ENCODE measurements at regions of chr11 and their contacts with region 1.

Region 1: DNA sequence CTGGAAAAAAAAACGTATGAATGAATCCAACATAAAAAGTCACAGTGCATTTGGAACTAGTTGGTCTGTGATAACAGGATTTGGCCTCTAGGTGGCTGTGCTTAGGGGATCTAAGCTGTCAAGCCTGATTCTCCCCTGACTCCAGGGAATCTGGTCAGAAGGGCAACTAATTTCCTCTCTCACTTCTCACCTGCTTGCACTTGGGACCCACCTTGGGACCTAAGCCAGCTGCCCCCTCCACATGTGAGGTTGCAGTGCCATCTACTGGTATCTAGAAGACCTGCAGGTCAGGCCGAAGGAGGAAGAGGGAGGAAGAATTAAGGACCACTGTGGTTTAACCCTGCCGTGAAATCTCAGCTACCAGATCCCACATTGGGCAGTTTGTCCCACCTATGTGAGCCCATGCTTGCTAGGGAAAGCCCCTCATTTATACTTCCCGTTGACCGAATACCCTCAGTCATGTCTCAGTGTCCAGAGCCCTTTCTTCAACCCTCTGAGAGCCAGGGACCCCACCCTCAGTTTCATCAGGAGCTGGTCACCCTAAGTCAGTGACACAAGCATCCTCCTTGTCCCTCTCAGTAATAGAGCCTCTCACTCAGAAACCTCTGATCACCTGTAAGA is 33.2 kb upstream of the CAVIN3 start:
- DNase-seq: peak; percentile 82
- ATAC-seq: peak; percentile 99
- H3K4me3 Mint-ChIP-seq: no peak overlapping the region
- H3K27ac Mint-ChIP-seq: no peak overlapping the region
- H3K4me1 Mint-ChIP-seq: peaks cover 5% of the 10 kb centered on the region
- H3K27me3 Mint-ChIP-seq: no peaks in the 10 kb centered on the region
- CTCF ChIP-seq: peak; percentile 97

Region 2: DNA sequence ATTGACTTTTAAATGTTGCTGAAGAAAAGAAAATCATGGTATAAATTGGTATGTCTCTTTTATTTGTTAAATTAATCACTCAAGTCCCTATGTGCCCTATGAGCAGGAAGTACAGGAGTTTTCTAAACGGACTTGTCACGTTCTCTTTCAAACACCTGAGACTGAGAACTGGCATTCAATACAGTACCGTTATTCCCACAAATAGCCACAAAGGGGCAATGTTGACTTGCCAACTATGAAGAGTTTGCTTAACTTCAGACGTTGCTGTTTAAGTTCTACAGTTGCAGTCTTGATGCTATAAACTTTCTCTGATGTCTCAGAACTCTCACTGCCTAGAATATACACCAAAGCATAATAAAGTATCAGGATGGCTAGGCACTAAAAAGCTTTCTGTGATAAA is 330.5 kb before region 1 on chr11:
- CTCF ChIA-PET with region 1: interaction called, 10 read pairs
- POLR2A ChIA-PET with region 1: no interaction called
- DNase-seq: no peak
- ATAC-seq: peak; percentile 93
- H3K4me3 Mint-ChIP-seq: no peak overlapping the region
- H3K27ac Mint-ChIP-seq: no peak overlapping the region
- H3K4me1 Mint-ChIP-seq: 0 out of 2 replicates have a peak, but pooled peaks cover 4% of the 10 kb centered on the region
- H3K27me3 Mint-ChIP-seq: peaks cover 26% of the 10 kb centered on the region
- CTCF ChIP-seq: no peak

Region 3: GRCh38 chr11:6040874-6041273 is 312.6 kb before region 1 on chr11:
- CTCF ChIA-PET with region 1: no interaction called
- POLR2A ChIA-PET with region 1: no interaction called
- DNase-seq: no peak
- ATAC-seq: no peak
- H3K4me3 Mint-ChIP-seq: no peak overlapping the region
- H3K27ac Mint-ChIP-seq: no peak overlapping the region
- H3K4me1 Mint-ChIP-seq: peaks cover 3% of the 10 kb centered on the region
- H3K27me3 Mint-ChIP-seq: no peaks in the 10 kb centered on the region
- CTCF ChIP-seq: no peak

Region 4: DNA sequence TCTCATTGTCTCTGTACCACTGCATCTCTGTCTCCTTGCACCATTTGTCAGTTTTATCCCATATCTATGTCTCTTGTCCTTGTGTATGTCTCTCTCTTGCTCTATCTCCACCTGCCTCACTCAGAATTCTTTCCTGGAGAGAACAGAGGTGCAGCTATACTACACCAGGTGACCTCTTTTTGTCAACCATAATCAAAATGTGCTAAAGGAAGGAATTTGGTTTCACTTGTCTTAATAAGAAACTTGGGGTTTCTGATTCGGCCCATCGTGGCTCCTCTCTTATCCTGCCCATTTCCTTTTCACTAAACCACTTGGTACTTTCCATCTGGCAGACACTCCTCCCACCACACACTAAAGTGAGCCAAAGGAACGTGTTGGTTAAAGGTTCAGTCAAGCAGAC is 150.2 kb before region 1 on chr11:
- CTCF ChIA-PET with region 1: no interaction called
- POLR2A ChIA-PET with region 1: no interaction called
- DNase-seq: no peak
- ATAC-seq: no peak
- H3K4me3 Mint-ChIP-seq: no peak overlapping the region
- H3K27ac Mint-ChIP-seq: no peak overlapping the region
- H3K4me1 Mint-ChIP-seq: peaks cover 9% of the 10 kb centered on the region
- H3K27me3 Mint-ChIP-seq: no peaks in the 10 kb centered on the region
- CTCF ChIP-seq: no peak

Region 5: DNA sequence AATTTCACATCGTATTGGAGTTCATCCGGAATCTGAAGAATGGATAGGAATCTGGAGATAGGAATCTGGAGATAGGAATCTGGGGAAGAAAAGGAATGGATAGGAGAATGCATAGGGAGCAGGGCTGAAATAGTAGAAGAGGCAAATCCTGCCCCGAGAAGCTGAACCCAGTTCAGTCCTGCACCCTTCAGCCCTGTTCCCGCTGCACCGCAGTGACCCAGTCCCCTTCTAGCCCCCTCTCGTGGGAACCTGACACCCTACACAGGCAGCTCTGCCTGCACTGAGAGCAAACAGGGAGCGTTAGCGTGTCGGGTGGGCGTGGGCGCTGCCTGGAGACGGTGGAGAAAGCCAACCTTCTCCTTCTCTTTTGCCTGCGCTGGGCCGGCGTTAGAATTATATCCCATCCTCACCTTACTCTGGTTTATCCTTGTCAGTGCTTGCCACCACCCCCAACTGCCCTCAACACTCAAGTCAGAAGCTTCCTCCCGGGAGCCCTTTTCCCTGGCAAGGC is 94.9 kb before region 1 on chr11:
- CTCF ChIA-PET with region 1: interaction called, 139 read pairs
- POLR2A ChIA-PET with region 1: no interaction called
- DNase-seq: peak; percentile 36
- ATAC-seq: peak; percentile 40
- H3K4me3 Mint-ChIP-seq: no peak overlapping the region; the same call in none of the 2 replicates
- H3K27ac Mint-ChIP-seq: no peak overlapping the region
- H3K4me1 Mint-ChIP-seq: no peaks in the 10 kb centered on the region
- H3K27me3 Mint-ChIP-seq: no peaks in the 10 kb centered on the region
- CTCF ChIP-seq: no peak

Region 6: GRCh38 chr11:6298605-6299004 is 54.9 kb before region 1 on chr11:
- CTCF ChIA-PET with region 1: interaction called, 37 read pairs
- POLR2A ChIA-PET with region 1: no interaction called
- DNase-seq: peak; percentile 86
- ATAC-seq: peak; percentile 96
- H3K4me3 Mint-ChIP-seq: no peak overlapping the region
- H3K27ac Mint-ChIP-seq: peak overlapping the region; percentile 40; the same call in 1 of the 2 replicates
- H3K4me1 Mint-ChIP-seq: peaks cover 57% of the 10 kb centered on the region
- H3K27me3 Mint-ChIP-seq: no peaks in the 10 kb centered on the region
- CTCF ChIP-seq: peak; percentile 52; the same call in 1 of the 2 replicates

Region 7: DNA sequence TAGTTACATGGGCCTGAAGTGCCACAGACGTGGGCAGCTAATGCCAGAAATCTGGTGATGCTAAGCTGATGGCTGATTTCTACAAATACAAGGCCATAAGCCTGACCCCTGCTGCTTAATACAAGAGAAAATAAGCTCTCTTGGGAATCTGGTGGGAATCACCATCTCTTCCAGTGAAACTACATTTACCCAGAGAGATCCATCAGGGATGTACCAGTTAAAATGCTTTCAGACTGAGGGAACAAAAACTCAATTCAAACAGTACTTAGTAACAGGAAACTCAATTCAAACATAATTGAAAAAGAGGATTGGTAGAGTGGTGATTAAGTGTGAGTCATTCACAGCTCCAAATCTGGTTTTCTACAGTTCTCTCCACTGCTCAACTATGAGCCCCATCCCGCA is 31.5 kb before region 1 on chr11:
- CTCF ChIA-PET with region 1: interaction called, 90 read pairs
- POLR2A ChIA-PET with region 1: interaction called, 8 read pairs
- DNase-seq: no peak
- ATAC-seq: no peak
- H3K4me3 Mint-ChIP-seq: peak overlapping the region; percentile 41
- H3K27ac Mint-ChIP-seq: peak overlapping the region; percentile 96
- H3K4me1 Mint-ChIP-seq: peaks cover 71% of the 10 kb centered on the region
- H3K27me3 Mint-ChIP-seq: peaks cover 16% of the 10 kb centered on the region
- CTCF ChIP-seq: no peak

Region 8: DNA sequence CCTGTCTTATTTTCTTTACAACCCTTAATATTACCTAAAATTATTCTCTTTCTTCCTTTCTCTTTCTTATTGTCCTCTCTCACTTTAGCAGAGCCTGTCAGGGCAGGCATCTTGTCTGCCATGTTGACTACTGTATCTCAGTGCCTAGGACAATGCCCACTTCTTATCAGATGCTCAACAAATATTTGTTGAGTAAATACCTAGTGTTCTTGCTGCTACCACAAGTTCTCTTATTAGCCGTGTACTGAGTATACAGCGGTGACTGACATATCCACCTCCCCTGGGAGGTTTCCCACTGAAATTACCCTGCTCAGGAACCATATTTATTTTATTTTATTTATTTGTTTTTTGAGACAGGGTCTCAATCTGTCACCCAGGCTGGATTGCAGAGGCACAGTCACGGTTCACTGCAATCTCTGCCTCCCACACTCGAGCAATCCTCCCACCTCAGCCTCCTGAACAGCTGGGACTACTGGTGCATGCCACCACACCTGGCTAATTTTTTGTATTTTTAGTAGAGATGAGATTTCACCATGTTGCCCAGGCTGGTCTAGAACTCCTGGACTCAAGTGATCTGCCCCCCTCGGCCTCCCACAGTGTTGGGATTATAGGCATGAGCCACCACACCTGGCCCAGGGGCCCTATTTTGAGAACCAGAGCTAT is 80.7 kb after region 1 on chr11:
- CTCF ChIA-PET with region 1: no interaction called
- POLR2A ChIA-PET with region 1: no interaction called
- DNase-seq: no peak
- ATAC-seq: no peak
- H3K4me3 Mint-ChIP-seq: no peak overlapping the region
- H3K27ac Mint-ChIP-seq: no peak overlapping the region
- H3K4me1 Mint-ChIP-seq: no peaks in the 10 kb centered on the region
- H3K27me3 Mint-ChIP-seq: peaks cover 4% of the 10 kb centered on the region
- CTCF ChIP-seq: no peak